ENCODE measurements at regions of chr9 and their contacts with region 1.

Region 1: DNA sequence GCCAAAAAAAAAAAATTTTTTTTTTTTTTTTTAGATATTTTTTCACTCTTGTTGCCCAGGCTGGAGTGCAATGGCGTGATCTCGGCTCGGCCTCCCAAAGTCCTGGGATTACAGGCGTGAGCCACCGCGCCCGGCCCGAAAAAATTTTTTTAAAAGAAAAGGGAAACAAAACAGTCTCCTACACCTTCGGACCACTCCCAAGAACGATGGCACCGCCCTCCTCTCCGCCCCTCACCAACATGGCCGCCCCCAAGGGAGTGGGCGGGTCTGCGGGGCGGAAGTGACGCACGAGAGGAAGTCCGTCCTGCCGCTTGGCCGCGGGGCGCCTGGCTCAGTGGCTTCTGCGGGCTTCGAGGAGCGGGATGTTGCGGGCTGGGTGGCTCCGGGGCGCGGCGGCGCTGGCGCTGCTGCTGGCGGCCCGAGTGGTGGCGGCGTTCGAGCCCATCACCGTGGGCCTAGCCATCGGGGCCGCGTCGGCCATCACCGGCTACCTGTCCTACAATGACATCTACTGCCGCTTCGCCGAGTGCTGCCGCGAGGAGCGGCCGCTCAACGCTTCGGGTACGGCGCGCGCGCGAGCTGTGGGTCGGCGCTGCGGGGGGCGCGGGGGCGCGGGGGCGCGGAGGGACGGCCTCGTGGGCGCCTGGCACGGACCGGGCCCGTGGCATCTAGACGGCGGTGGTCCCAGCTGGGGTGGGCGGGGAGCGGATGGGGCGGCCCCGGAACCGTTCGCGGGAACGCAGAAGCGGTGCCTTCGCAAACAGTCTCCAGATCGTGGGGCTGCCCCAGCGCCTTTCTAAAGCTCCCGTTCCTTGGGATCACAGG is at the start of gene TOR1B:
- DNase-seq: peak; percentile 96
- H3K4me3 Mint-ChIP-seq: peak within 1 kb of the TSS; percentile 84
- H3K27ac Mint-ChIP-seq: peak within 1 kb of the TSS; percentile 85
- H3K4me1 Mint-ChIP-seq: peaks cover 17% of the 10 kb centered on the region
- H3K27me3 Mint-ChIP-seq: no peaks in the 10 kb centered on the region
- total RNA-seq, gene TOR1B: 20.6 to 23.0 TPM

Region 2: GRCh38 chr9:129868916-129869486 is 65.9 kb after region 1 on chr9:
- CTCF ChIA-PET with region 1: no interaction called
- POLR2A ChIA-PET with region 1: no interaction called
- intact Hi-C with region 1: loop called (anchors 2 kb)
- DNase-seq: peak; percentile 95
- H3K4me3 Mint-ChIP-seq: peak overlapping the region; percentile 67
- H3K27ac Mint-ChIP-seq: peak overlapping the region; percentile 90
- H3K4me1 Mint-ChIP-seq: peaks cover 71% of the 10 kb centered on the region
- H3K27me3 Mint-ChIP-seq: no peaks in the 10 kb centered on the region

Region 3: GRCh38 chr9:129900263-129901027 is 97.4 kb after region 1 on chr9:
- CTCF ChIA-PET with region 1: no interaction called
- POLR2A ChIA-PET with region 1: no interaction called
- intact Hi-C with region 1: no loop called
- DNase-seq: no peak
- H3K4me3 Mint-ChIP-seq: no peak overlapping the region
- H3K27ac Mint-ChIP-seq: peak overlapping the region; percentile 84
- H3K4me1 Mint-ChIP-seq: peaks cover 47% of the 10 kb centered on the region
- H3K27me3 Mint-ChIP-seq: no peaks in the 10 kb centered on the region